Heart left ventricle (tissue), 16 donors: ENCODE measurements at regions of chr18 and their contacts with region 1.

Region 1: GRCh38 chr18:4068552-4069158 is 386.5 kb downstream of the DLGAP1 start:
- DNase-seq: peak in 2 of 5 donors; percentile 12 to 22
- ATAC-seq: no peak
- H3K4me3 ChIP-seq: no peak overlapping the region
- H3K27ac ChIP-seq: no peak overlapping the region
- H3K4me1 ChIP-seq: no peaks in the 10 kb centered on the region
- H3K27me3 ChIP-seq: no peaks in the 10 kb centered on the region
- CTCF ChIP-seq: peak; percentile 61 to 80 (median 73)
- POLR2A ChIP-seq: no peak

Region 2: DNA sequence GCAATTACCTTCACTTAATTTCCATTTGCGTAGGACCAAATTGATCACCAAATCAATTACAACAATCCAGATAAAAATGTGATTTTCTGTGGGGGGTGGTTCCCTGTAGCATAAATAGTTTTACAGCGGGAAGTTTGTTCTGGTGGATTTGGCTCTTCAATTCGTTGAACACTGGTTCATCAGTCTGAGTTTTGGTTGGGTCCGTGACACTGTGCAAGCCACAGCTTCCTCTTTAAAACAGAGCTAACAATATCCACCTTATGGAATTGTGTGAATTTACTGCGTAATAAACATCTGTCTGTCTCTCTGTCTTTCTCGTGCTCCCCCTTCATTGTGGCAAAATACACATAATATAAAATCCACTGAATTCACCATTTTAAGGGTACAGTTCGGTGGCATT is 307.9 kb before region 1 on chr18:
- intact Hi-C with region 1: loop called in 1 of 10 experiments (anchors 10 kb)
- DNase-seq: no peak
- ATAC-seq: no peak
- H3K4me3 ChIP-seq: no peak overlapping the region
- H3K27ac ChIP-seq: no peak overlapping the region
- H3K4me1 ChIP-seq: peaks cover 0 to 7% (median 0%) of the 10 kb centered on the region in 12 donors
- H3K27me3 ChIP-seq: peaks cover 0 to 2% (median 0%) of the 10 kb centered on the region in 9 donors
- CTCF ChIP-seq: no peak
- POLR2A ChIP-seq: no peak

Region 3: DNA sequence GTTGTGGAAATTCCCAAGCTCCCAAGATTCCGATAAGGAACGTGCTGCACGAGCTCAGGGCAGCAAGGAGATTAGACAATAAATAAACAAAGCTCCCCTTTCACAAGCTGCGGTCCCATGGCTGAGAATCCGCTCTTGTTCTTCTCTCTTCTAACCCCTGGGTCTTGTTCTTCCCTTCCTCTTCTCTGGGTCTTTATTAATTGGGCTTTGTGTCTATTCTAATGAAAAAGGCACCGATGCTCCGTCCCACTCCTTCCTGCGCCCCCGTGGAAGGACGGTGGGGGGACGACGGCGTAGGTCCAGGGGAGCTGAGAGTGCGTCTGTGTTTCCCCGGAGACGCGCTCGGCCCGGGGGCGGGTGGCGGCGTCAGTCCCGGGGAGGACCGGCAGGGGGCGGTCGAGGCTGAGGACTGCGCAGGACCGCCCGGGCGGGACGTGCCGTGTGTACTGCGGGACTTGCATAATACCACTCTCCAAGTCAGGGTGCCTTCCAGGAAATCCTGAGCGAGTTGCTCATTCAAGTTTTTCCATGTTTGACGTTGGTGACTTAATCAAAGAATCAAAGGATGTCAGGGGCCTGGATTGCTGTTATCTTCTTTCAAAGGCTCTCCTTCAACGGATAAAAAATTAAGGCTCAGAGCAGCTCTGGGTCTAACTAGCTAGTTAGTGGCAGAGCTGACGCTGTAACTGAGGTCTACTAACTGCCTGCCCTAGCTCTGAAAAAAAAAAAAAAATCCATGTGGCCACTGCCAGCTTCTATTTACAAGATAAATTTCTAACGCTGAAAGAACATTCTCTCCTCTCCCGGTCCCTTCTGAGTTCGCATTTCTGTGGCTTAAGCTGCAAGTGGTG is 297.3 kb before region 1 on chr18:
- intact Hi-C with region 1: loop called in 8 of 10 experiments (anchors 2 to 10 kb)
- DNase-seq: peak; percentile 82 to 91 (median 84)
- ATAC-seq: peak; percentile 97 to 100 (median 100)
- H3K4me3 ChIP-seq: peak overlapping the region in 11 of 12 donors; percentile 1 to 53 (median 43)
- H3K27ac ChIP-seq: peak overlapping the region in 9 of 12 donors; percentile 18 to 70 (median 59)
- H3K4me1 ChIP-seq: peaks cover 0 to 9% (median 2%) of the 10 kb centered on the region in 12 donors
- H3K27me3 ChIP-seq: no peaks in the 10 kb centered on the region
- CTCF ChIP-seq: peak; percentile 93 to 99 (median 96)
- POLR2A ChIP-seq: no peak

Region 4: DNA sequence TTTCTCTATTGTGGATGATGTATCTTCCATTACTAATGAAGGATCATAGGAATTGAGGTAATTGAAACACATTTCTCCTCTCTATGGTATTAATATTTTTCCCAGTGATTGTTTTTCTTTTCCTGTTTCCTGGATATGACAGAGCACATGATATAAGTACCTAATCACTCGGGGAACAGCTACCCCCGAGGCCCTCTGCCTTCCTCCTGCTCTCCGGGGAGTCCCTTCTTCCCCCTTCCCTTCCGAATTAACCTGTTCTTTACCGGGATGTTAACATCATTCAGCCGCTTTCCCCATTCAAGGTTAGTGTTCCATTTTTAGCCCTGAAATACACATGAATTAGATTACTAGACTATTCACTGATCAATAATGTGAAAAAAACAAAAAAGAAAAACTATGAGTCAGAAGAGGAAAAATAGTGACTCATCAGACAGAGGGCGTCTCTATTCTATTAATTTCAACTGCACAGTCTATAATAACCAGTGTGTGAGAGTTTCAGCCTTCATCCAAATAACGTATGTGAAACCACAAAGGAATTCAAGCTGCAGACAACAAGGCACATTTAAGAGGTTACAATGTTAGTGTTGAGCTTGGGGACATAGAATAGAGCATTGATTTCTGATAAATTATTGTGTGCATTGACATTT is 64.3 kb before region 1 on chr18:
- intact Hi-C with region 1: loop called in 2 of 10 experiments (anchors 5 to 10 kb)
- DNase-seq: no peak
- ATAC-seq: no peak
- H3K4me3 ChIP-seq: no peak overlapping the region
- H3K27ac ChIP-seq: no peak overlapping the region
- H3K4me1 ChIP-seq: no peaks in the 10 kb centered on the region
- H3K27me3 ChIP-seq: no peaks in the 10 kb centered on the region
- CTCF ChIP-seq: no peak
- POLR2A ChIP-seq: no peak